ENCODE measurements at regions of chr12 and their contacts with region 1.

Region 1: DNA sequence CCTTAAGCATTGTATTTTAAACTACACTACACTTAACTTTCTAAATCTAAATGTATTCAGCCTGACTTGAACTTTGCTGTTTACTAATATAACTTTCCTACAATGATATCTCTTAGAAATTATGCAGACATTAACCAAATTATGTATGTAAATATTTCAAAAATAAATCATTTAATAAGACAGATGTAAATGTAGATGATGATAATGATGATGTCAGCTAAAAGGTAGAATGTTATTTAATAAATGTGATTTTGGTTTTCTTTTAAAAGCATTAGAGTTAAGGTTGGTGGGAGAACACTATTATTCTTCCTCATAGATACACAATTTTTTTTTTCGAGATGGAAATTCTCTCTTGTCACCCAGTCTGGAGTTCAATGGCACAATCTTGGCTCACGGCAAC is 10.1 kb downstream of the TAS2R43 start:
- DNase-seq: no peak
- H3K4me3 ChIP-seq: no peak overlapping the region
- H3K4me3 Mint-ChIP-seq: no peak overlapping the region
- H3K27ac Mint-ChIP-seq: no peak overlapping the region
- H3K4me1 ChIP-seq: no peaks in the 10 kb centered on the region
- H3K4me1 Mint-ChIP-seq: no peaks in the 10 kb centered on the region
- H3K27me3 ChIP-seq: no peaks in the 10 kb centered on the region
- H3K27me3 Mint-ChIP-seq: no peaks in the 10 kb centered on the region
- CTCF ChIP-seq: no peak

Region 2: DNA sequence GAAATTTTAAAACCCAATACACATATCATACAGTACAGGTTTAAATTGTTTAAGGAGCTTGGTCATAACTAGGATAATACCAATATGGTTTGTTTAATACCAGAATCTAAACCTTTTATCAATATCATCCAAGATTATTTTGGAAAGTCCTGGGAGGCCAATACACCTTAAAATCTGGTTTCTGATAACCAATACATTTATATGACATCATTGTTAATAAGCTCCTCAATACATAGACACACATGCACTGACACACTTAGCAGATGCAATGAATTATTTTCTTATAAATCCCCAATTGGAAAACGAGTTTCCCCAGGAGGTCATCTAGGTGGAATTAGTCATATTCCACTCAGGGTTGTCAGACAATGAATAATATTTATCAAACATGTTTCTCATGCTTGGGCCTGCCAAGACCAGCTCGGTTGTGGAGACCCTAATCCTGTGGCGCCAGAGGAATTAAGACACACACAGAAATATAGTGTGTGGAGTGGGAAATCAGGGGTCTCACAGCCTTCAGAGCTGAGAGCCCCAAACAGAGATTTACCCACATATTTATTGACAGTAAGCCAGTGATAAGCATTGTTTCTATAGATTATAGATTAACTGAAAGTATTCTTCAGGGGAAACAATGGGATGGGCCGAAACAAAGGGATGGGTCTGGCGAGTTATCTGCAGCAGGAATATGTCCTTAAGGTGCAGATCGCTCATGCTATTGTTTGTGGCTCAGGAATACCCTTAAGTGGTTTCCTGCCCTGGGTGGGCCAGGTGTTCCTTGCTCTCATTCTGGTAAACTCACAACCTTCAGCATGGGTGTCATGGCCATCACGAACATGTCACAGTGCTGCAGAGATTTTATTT is 32.1 kb before region 1 on chr12:
- CTCF ChIA-PET with region 1: no interaction called
- POLR2A ChIA-PET with region 1: no interaction called
- intact Hi-C with region 1: loop called (anchors 2 kb)
- DNase-seq: no peak
- H3K4me3 ChIP-seq: no peak overlapping the region
- H3K4me3 Mint-ChIP-seq: no peak overlapping the region
- H3K27ac Mint-ChIP-seq: no peak overlapping the region
- H3K4me1 ChIP-seq: no peaks in the 10 kb centered on the region
- H3K4me1 Mint-ChIP-seq: no peaks in the 10 kb centered on the region
- H3K27me3 ChIP-seq: no peaks in the 10 kb centered on the region
- H3K27me3 Mint-ChIP-seq: no peaks in the 10 kb centered on the region
- CTCF ChIP-seq: no peak

Region 3: GRCh38 chr12:11134305-11134704 is 52.3 kb after region 1 on chr12 and contains the start of gene TAS2R30:
- CTCF ChIA-PET with region 1: no interaction called
- POLR2A ChIA-PET with region 1: no interaction called
- intact Hi-C with region 1: loop called (anchors 5 kb)
- DNase-seq: no peak
- H3K4me3 ChIP-seq: no peak within 1 kb of the TSS
- H3K4me3 Mint-ChIP-seq: no peak within 1 kb of the TSS
- H3K27ac Mint-ChIP-seq: no peak within 1 kb of the TSS
- H3K4me1 ChIP-seq: peaks cover 7% of the 10 kb centered on the region; the same call in 1 of the 2 replicates
- H3K4me1 Mint-ChIP-seq: peaks cover 8% of the 10 kb centered on the region
- H3K27me3 ChIP-seq: no peaks in the 10 kb centered on the region
- H3K27me3 Mint-ChIP-seq: no peaks in the 10 kb centered on the region
- CTCF ChIP-seq: no peak
- total RNA-seq, gene TAS2R30: 3.8 and 5.8 TPM in 2 replicates

Measured in Caco-2 (cell line).